Activated T-helper 1 cell treated with anti-CD3 and anti-CD28 coated beads, Interleukin-12 subunit alpha, Interleukin-12 subunit beta, Interleukin-2, Interleukin-4 antibody, amounts not matched to agents 30 ng/mL and 10 ng/mL and 1 ng/mL, durations not matched to agents 14 hours and 24 hours and 36 hours (primary cell): ENCODE measurements at regions of chrX and their contacts with region 1.

Region 1: GRCh38 chrX:154091678-154092077 is 5.8 kb downstream of the MECP2 start:
- DNase-seq: no peak
- H3K4me3 Mint-ChIP-seq: no peak overlapping the region
- H3K27ac Mint-ChIP-seq: no peak overlapping the region
- H3K4me1 Mint-ChIP-seq: peaks cover 49% of the 10 kb centered on the region
- H3K27me3 Mint-ChIP-seq: no peaks in the 10 kb centered on the region

Region 2: GRCh38 chrX:153885968-153886903 is 205.4 kb before region 1 on chrX and contains the start of gene L1CAM:
- intact Hi-C with region 1: no loop called
- DNase-seq: no peak
- H3K4me3 Mint-ChIP-seq: peak within 1 kb of the TSS; percentile 61
- H3K27ac Mint-ChIP-seq: no peak within 1 kb of the TSS
- H3K4me1 Mint-ChIP-seq: peaks cover 4% of the 10 kb centered on the region
- H3K27me3 Mint-ChIP-seq: peaks cover 20% of the 10 kb centered on the region
- total RNA-seq, gene L1CAM: 1.7 and 3.3 TPM in 2 replicates

Region 3: GRCh38 chrX:154019633-154020528 is 71.8 kb before region 1 on chrX and contains the start of gene IRAK1:
- intact Hi-C with region 1: loop called (anchors 2 kb)
- DNase-seq: peak; percentile 57
- H3K4me3 Mint-ChIP-seq: peak within 1 kb of the TSS; percentile 94
- H3K27ac Mint-ChIP-seq: peak within 1 kb of the TSS; percentile 89
- H3K4me1 Mint-ChIP-seq: peaks cover 4% of the 10 kb centered on the region
- H3K27me3 Mint-ChIP-seq: no peaks in the 10 kb centered on the region
- total RNA-seq, gene IRAK1: 165 and 172 TPM in 2 replicates

Region 4: GRCh38 chrX:154113729-154114128 is 22.1 kb after region 1 on chrX:
- intact Hi-C with region 1: no loop called
- DNase-seq: no peak
- H3K4me3 Mint-ChIP-seq: no peak overlapping the region
- H3K27ac Mint-ChIP-seq: no peak overlapping the region
- H3K4me1 Mint-ChIP-seq: no peaks in the 10 kb centered on the region
- H3K27me3 Mint-ChIP-seq: no peaks in the 10 kb centered on the region